Mammary epithelial cell (primary cell): ENCODE measurements at regions of chr3 and their contacts with region 1.

Region 1: DNA sequence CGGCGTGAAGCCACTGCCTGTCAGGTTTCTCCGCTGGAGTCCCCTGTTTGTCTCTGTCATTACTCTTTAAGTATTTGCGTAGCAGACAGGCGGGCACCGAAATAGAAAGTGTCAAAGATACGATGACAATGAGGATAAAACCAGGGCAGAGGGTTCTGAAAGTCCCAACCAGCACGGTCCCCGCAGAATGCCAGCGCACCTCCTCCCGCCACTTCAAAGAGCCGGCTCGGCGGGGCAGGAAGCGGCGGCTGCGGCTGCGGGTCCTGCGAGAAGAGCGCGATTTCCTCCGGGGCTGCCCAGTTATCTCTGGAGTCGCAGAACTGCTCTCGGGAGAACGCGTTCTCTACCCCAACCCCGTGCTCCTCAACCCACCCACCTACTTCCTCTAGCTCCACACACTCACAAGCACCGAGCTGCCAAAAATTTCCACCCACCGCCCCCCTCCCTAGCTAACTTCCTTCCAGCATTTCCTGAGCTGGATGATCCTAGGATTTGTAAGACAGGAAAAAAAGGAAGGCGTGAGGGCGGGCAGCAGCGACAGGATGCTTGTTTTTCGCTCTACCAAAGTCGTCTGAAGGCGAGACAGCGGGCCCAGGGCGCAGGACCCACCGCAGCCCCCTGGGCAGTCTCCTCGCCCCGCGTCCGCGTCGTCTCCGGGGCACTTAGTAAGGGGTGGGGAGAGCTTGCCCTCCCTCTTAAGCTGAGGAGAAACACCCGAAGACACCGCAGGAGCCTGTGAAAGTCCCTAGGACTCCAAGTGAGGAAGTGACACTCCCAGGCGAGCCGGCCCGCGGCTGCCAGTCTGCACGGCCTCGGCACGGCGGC is at the start of gene ARHGAP31:
- DNase-seq: peak; percentile 45
- H3K4me3 ChIP-seq: peak within 1 kb of the TSS; percentile 69 to 75 (median 69)
- H3K27ac ChIP-seq: peak within 1 kb of the TSS; percentile 40
- H3K4me1 ChIP-seq: peaks cover 16% of the 10 kb centered on the region
- H3K27me3 ChIP-seq: no peaks in the 10 kb centered on the region
- CTCF ChIP-seq: no peak
- total RNA-seq, gene ARHGAP31: 8.7 to 11.5 TPM

Region 2: GRCh38 chr3:119227070-119227850 is 66.8 kb before region 1 on chr3:
- CTCF ChIA-PET with region 1: no interaction called
- dilution Hi-C with region 1: no loop called
- in situ Hi-C with region 1: no loop called
- intact Hi-C with region 1: no loop called
- DNase-seq: no peak
- H3K4me3 ChIP-seq: no peak overlapping the region
- H3K27ac ChIP-seq: no peak overlapping the region
- H3K4me1 ChIP-seq: no peaks in the 10 kb centered on the region
- H3K27me3 ChIP-seq: no peaks in the 10 kb centered on the region
- CTCF ChIP-seq: no peak

Region 3: DNA sequence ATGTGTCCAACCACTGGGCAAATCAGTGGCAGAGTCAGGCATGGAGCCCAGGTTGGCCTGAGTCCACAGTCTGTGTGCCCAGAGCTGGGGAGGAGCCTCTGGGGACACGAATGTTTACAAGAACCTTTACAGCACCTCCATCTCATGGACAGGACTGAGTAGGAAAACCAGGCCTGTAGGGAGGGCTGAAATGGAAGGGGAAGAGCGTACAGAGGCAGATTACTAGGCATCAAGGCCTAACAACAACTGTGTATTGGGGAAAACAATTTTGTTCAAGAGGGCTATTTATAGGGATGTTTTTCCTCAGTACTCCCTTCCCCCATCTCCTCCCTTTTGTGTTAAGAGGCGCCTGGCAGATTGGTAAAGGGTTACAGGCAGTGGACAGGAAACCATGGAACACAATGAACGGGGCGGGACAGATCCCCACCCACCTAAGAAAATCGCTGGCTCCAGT is 15.0 kb before region 1 on chr3:
- CTCF ChIA-PET with region 1: no interaction called
- dilution Hi-C with region 1: no loop called
- in situ Hi-C with region 1: no loop called
- intact Hi-C with region 1: no loop called
- DNase-seq: no peak
- H3K4me3 ChIP-seq: no peak overlapping the region
- H3K27ac ChIP-seq: no peak overlapping the region
- H3K4me1 ChIP-seq: no peaks in the 10 kb centered on the region
- H3K27me3 ChIP-seq: peaks cover 2% of the 10 kb centered on the region
- CTCF ChIP-seq: no peak

Region 4: GRCh38 chr3:119322835-119323722 is 29.0 kb after region 1 on chr3:
- CTCF ChIA-PET with region 1: no interaction called
- dilution Hi-C with region 1: no loop called
- in situ Hi-C with region 1: no loop called
- intact Hi-C with region 1: loop called (anchors 2 kb)
- DNase-seq: peak; percentile 86
- H3K4me3 ChIP-seq: peak overlapping the region; percentile 49 to 54 (median 51)
- H3K27ac ChIP-seq: peak overlapping the region; percentile 65
- H3K4me1 ChIP-seq: peaks cover 19% of the 10 kb centered on the region
- H3K27me3 ChIP-seq: no peaks in the 10 kb centered on the region
- CTCF ChIP-seq: no peak

Region 5: GRCh38 chr3:119352849-119353502 is 58.9 kb after region 1 on chr3:
- CTCF ChIA-PET with region 1: interaction called, 3 read pairs
- dilution Hi-C with region 1: no loop called
- in situ Hi-C with region 1: no loop called
- intact Hi-C with region 1: loop called (anchors 2 kb)
- DNase-seq: peak; percentile 11
- H3K4me3 ChIP-seq: no peak overlapping the region
- H3K27ac ChIP-seq: no peak overlapping the region
- H3K4me1 ChIP-seq: peaks cover 5% of the 10 kb centered on the region
- H3K27me3 ChIP-seq: no peaks in the 10 kb centered on the region
- CTCF ChIP-seq: peak; percentile 24 to 42

Region 6: GRCh38 chr3:119428538-119428937 is 134.5 kb after region 1 on chr3:
- CTCF ChIA-PET with region 1: no interaction called
- dilution Hi-C with region 1: no loop called
- in situ Hi-C with region 1: loop called in 1 of 2 experiments (anchors 25 kb)
- intact Hi-C with region 1: no loop called
- DNase-seq: no peak
- H3K4me3 ChIP-seq: no peak overlapping the region
- H3K27ac ChIP-seq: no peak overlapping the region
- H3K4me1 ChIP-seq: no peaks in the 10 kb centered on the region
- H3K27me3 ChIP-seq: no peaks in the 10 kb centered on the region
- CTCF ChIP-seq: no peak